Sigmoid colon (tissue), 7 donors: ENCODE measurements at regions of chr11 and their contacts with region 1.

Region 1: GRCh38 chr11:5767056-5767455 is 13.0 kb downstream of the OR52N4 start:
- DNase-seq: no peak
- H3K4me3 ChIP-seq: no peak overlapping the region
- H3K27ac ChIP-seq: no peak overlapping the region
- H3K4me1 ChIP-seq: no peaks in the 10 kb centered on the region
- H3K27me3 ChIP-seq: no peaks in the 10 kb centered on the region
- CTCF ChIP-seq: no peak
- EP300 ChIP-seq: no peak
- POLR2A ChIP-seq: no peak

Region 2: GRCh38 chr11:5791165-5791564 is 24.1 kb after region 1 on chr11 and contains the start of gene OR52N1:
- intact Hi-C with region 1: loop called (anchors 2 kb)
- DNase-seq: no peak
- H3K4me3 ChIP-seq: no peak within 1 kb of the TSS
- H3K27ac ChIP-seq: no peak within 1 kb of the TSS
- H3K4me1 ChIP-seq: no peaks in the 10 kb centered on the region
- H3K27me3 ChIP-seq: no peaks in the 10 kb centered on the region
- CTCF ChIP-seq: no peak
- EP300 ChIP-seq: no peak
- POLR2A ChIP-seq: no peak
- total RNA-seq, gene OR52N1: not detected